ENCODE measurements at regions of chr15 and their contacts with region 1.

Region 1: GRCh38 chr15:101188637-101189408 is 63.0 kb downstream of the CHSY1 start:
- DNase-seq: no peak
- ATAC-seq: peak; percentile 56

Region 2: GRCh38 chr15:100544290-100544945 is 644.4 kb before region 1 on chr15:
- intact Hi-C with region 1: no loop called
- DNase-seq: no peak
- ATAC-seq: no peak

Region 3: DNA sequence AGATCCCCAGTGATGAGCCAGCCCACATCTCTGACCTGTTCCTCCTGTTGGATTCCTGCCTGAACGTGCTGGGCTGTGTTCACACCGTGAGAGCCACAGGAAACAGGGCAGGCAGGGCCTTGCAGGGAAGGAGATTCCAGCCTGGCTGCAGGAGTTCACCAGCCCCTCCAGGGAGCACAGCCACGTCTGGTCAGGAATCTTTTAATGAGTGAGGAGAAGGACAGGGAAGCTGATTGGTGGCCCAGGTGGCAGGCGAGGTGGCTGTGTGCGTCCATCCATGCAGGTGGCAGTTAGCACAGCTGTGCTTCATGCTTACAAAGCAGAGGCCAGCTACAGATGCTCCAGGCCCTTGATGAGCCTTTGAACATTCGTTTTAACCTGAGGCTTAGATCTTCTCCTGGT is 259.2 kb before region 1 on chr15:
- intact Hi-C with region 1: no loop called
- DNase-seq: no peak
- ATAC-seq: no peak

Region 4: DNA sequence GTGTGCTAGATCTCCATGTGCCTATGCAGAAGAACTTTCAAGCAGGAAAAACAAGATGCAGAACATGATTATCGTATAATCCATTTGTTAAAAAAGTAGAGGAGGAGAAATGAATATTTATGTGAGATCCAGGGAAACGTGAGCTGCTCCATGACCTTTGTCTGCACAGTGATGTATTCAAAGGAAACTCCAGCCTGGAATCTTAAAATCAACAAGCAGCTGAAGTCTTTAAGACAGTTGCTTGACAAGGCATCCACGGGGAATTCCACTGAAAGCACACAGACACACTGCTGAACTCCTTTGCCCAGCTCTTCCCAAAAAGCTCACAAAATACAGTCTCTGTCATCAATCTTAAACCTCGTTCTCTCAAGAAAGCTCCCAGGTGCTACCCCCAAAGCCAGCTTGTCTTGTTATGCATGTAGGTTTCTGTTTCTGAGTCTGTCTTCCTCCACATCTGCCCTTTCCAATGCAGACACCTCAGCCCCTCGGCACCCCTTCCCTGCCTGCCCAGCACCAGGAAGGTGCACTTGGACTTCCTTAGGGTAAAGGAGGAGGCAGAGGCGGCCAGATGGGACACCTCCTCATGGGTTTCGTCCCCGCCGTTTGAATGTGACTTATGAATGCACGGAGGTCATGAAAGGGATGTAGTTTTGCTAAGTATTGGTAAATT is 240.9 kb before region 1 on chr15:
- intact Hi-C with region 1: no loop called
- DNase-seq: no peak
- ATAC-seq: no peak

Region 5: GRCh38 chr15:101121511-101122090 is 67.2 kb before region 1 on chr15:
- intact Hi-C with region 1: loop called (anchors 5 kb)
- DNase-seq: peak; percentile 91
- ATAC-seq: peak; percentile 92

Region 6: DNA sequence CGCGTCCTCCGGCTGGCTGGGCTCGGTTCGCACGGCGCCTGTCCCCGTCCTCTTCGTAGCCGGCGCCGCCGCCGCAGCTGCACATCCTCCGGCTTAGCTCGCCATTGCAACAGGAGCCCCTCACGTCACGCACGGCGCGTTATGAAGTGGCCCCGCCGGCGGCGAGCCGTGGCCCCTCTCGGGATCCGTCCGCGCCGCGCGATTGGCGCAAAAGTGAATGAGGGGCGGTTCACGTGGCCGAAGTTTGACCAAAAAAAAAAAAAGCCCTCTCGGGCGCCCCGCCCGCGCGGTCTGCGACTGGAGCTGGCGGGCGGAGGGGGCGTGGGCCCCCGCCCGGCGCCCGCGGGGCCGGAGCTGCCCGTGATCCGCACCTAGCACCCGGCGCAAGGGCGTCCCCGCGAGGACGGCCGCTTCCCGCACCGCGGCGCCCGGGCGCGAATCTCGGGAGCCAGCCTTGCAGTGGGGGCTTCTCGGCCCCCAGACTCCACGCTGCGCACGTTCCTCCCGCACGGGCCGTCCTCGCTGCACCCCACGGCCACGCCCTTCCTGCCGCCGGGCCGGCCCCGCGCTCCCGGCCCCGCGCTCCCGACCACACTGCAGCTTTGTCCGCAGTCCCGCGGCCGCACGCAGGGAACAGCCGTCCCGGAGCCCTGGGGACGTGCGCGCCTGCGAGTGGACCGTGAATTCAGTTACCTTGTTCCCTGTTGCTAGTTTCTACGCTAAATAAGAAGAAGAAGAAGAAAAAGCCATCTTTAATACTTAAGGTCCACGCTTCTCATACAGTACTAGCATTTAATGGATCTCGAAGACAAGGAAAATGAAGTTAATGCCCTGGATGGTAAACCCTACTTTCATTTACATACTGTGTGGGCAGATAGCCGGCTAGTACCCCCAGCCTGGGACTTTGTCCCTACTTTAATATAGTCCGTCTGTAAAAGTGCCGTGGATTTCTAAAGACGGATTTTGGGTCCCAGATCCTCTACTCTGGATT is 63.3 kb after region 1 on chr15 and contains the start of gene CHSY1:
- intact Hi-C with region 1: loop called (anchors 2 kb)
- DNase-seq: peak; percentile 97
- ATAC-seq: peak; percentile 86
- total RNA-seq, gene CHSY1: 13.3 TPM

Region 7: GRCh38 chr15:101269479-101270223 is 80.8 kb after region 1 on chr15:
- intact Hi-C with region 1: no loop called
- DNase-seq: no peak
- ATAC-seq: peak; percentile 51

Measured in Right ventricle myocardium inferior (tissue), 1 donor.